Kidney (tissue), 22 donors: ENCODE measurements at regions of chr16 and their contacts with region 1.

Region 1: GRCh38 chr16:66728117-66728787 is 23.2 kb downstream of the DYNC1LI2 start:
- DNase-seq: peak in 2 of 5 donors; percentile 53 to 69
- H3K4me3 ChIP-seq: no peak overlapping the region
- H3K27ac ChIP-seq: no peak overlapping the region
- H3K4me1 ChIP-seq: no peaks in the 10 kb centered on the region
- H3K27me3 ChIP-seq: no peaks in the 10 kb centered on the region
- CTCF ChIP-seq: peak; percentile 52

Region 2: DNA sequence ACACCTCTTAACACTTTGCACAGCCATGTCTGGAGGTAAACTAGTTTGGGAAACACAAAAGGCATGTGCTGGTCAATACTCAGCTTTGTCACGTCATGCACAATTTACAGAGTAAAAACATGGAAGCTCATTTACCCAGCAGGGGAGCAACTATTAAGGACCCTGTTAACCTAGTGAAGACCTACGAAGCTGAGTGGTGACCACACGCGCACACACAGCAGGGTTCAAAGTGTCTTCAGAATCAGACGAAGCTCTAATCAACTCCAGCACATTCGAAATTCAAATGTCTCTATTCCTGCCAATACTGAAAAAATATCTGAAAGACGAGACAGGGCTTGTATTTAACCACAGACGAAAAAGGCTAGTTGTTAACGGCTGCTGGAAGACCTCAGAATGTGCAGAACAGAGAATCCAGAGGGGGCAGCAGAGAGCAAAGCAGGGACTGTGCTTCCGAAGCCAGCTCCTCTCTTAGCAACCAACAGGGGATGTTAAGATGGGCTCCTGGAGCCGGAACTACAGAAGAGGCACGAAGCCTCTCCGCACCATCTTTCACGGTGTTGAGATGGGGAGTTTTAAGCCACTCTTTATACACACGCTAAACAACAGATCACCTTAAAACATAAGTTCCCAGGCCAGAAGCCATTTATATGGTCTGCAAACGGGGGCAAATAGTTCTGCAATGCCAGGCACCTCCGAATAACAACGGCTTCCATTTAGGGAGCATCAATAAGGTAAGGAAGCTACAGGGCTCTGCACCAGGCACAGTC is 77.4 kb before region 1 on chr16:
- intact Hi-C with region 1: no loop called
- DNase-seq: peak; percentile 82 to 96 (median 90)
- H3K4me3 ChIP-seq: peak overlapping the region in 2 of 3 donors; percentile 40 to 50
- H3K27ac ChIP-seq: no peak overlapping the region
- H3K4me1 ChIP-seq: peaks cover 0 to 16% (median 7%) of the 10 kb centered on the region in 3 donors
- H3K27me3 ChIP-seq: no peaks in the 10 kb centered on the region
- CTCF ChIP-seq: peak; percentile 95

Region 3: GRCh38 chr16:66842765-66843164 is 114.5 kb after region 1 on chr16:
- intact Hi-C with region 1: no loop called
- DNase-seq: peak in 1 of 5 donors; percentile 24
- H3K4me3 ChIP-seq: no peak overlapping the region
- H3K27ac ChIP-seq: no peak overlapping the region
- H3K4me1 ChIP-seq: peaks cover 0 to 6% (median 0%) of the 10 kb centered on the region in 3 donors
- H3K27me3 ChIP-seq: peaks cover 5% of the 10 kb centered on the region
- CTCF ChIP-seq: no peak

Region 4: GRCh38 chr16:66859397-66860068 is 131.3 kb after region 1 on chr16:
- intact Hi-C with region 1: loop called (anchors 10 kb)
- DNase-seq: peak in 1 of 5 donors; percentile 6
- H3K4me3 ChIP-seq: no peak overlapping the region
- H3K27ac ChIP-seq: no peak overlapping the region
- H3K4me1 ChIP-seq: no peaks in the 10 kb centered on the region
- H3K27me3 ChIP-seq: no peaks in the 10 kb centered on the region
- CTCF ChIP-seq: no peak

Region 5: DNA sequence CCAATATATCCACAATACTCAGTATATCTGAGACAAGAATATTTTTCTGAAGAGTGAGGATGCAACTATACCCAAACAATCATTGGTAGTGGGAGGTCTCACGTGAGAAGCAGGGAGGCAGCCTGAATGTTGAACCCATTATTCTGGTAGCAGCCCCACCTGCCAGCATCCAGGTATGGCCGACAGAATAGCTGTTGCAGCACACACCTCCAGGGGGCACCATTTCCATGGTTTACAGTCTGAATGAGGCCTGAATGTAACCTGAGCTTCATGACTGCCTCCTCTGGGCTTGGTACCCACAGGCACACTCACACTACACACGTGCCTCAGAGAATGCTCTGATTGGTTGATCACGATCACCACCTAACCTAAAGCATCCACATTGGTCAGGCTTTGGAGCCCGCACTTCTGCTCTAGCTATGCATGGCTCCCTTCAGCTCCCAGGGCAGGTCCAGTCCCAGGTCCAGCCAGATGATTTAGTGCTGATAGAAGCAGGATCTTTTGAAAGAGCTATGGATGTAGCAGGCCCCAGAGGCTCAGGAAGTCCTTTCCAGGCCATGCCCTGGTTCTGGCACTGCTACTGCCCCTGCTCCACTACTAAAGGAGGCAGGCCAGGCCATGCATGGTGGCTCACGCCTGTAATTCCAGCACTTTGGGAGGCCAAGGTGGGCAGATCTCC is 289.7 kb after region 1 on chr16:
- intact Hi-C with region 1: no loop called
- DNase-seq: peak in 4 of 5 donors; percentile 90 to 94 (median 93)
- H3K4me3 ChIP-seq: no peak overlapping the region
- H3K27ac ChIP-seq: no peak overlapping the region
- H3K4me1 ChIP-seq: peaks cover 0 to 8% (median 0%) of the 10 kb centered on the region in 3 donors
- H3K27me3 ChIP-seq: no peaks in the 10 kb centered on the region
- CTCF ChIP-seq: peak; percentile 70